Caco-2 (cell line): ENCODE measurements at regions of chr10 and their contacts with region 1.

Region 1: DNA sequence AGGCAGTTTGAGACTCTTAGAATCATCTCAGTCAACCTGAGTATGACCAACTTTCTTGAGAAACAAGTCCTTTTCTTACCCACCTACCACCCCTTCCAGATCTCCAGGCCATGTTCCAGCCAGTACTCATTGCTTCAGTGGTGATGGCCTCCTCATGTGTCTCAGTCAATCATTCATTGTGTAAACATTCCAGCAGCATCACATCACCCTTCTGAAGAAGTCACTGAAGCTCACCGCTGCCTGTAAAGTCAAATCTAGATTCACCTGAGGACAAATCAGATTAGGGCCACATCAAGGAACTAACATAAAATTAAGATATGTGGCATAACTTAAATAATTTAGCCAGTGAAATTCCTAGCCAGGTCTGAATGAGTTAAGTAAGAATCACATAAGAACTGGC is 467.3 kb upstream of the NRP1 start:
- DNase-seq: peak; percentile 81 to 88
- H3K4me3 ChIP-seq: no peak overlapping the region
- H3K4me3 Mint-ChIP-seq: peak overlapping the region; percentile 39
- H3K27ac Mint-ChIP-seq: peak overlapping the region; percentile 90
- H3K4me1 ChIP-seq: peaks cover 69% of the 10 kb centered on the region
- H3K4me1 Mint-ChIP-seq: peaks cover 50% of the 10 kb centered on the region
- H3K27me3 ChIP-seq: no peaks in the 10 kb centered on the region
- H3K27me3 Mint-ChIP-seq: no peaks in the 10 kb centered on the region
- CTCF ChIP-seq: no peak

Region 2: GRCh38 chr10:33258967-33259366 is 542.8 kb before region 1 on chr10:
- CTCF ChIA-PET with region 1: no interaction called
- POLR2A ChIA-PET with region 1: interaction called, 12 read pairs
- intact Hi-C with region 1: no loop called
- DNase-seq: no peak
- H3K4me3 ChIP-seq: no peak overlapping the region
- H3K4me3 Mint-ChIP-seq: no peak overlapping the region
- H3K27ac Mint-ChIP-seq: peak overlapping the region; percentile 55
- H3K4me1 ChIP-seq: peaks cover 42% of the 10 kb centered on the region
- H3K4me1 Mint-ChIP-seq: peaks cover 38% of the 10 kb centered on the region
- H3K27me3 ChIP-seq: no peaks in the 10 kb centered on the region
- H3K27me3 Mint-ChIP-seq: no peaks in the 10 kb centered on the region
- CTCF ChIP-seq: no peak

Region 3: DNA sequence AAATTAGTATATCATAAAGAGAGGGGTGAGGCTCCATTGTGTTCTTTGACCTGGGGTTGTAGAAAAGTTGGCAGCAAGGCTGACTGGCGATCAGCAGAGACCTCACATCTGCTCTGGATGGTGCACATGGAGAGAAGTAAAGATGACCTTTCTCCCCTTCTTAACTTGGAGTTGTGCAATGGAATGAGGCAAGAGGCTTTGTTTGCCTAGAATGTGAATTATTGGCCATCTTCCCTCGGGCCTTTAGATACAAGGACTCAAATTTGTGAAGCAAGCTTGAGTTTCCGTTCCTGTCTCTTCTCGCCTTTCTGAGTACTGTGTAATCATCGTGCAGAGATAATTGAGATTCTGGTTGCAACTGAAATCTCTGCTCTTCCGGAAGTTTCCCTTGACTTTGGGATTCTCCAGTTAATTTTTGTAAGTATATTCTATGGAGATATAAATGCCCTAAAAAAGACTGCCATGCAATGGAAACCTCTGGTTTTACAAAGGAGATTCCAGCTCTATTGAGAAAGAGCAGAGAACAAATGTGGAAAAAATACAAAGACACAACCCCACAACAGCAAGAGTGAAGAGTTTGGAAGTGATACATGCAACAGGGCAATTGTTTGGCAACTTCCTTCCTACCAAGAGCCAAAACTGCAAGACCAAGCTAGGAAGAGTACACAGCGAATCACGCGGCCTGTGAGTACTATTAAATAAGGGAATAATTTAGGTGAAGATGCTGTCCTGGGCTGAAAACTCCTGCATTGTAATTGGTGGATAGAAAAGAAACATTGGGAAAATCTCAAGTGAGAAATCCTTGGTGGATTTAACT is 75.0 kb after region 1 on chr10:
- CTCF ChIA-PET with region 1: no interaction called
- POLR2A ChIA-PET with region 1: no interaction called
- intact Hi-C with region 1: loop called (anchors 1 kb)
- DNase-seq: peak; percentile 80 to 81
- H3K4me3 ChIP-seq: no peak overlapping the region
- H3K4me3 Mint-ChIP-seq: peak overlapping the region; percentile 55
- H3K27ac Mint-ChIP-seq: peak overlapping the region; percentile 86
- H3K4me1 ChIP-seq: peaks cover 24% of the 10 kb centered on the region
- H3K4me1 Mint-ChIP-seq: peaks cover 22% of the 10 kb centered on the region
- H3K27me3 ChIP-seq: no peaks in the 10 kb centered on the region
- H3K27me3 Mint-ChIP-seq: no peaks in the 10 kb centered on the region
- CTCF ChIP-seq: no peak

Region 4: DNA sequence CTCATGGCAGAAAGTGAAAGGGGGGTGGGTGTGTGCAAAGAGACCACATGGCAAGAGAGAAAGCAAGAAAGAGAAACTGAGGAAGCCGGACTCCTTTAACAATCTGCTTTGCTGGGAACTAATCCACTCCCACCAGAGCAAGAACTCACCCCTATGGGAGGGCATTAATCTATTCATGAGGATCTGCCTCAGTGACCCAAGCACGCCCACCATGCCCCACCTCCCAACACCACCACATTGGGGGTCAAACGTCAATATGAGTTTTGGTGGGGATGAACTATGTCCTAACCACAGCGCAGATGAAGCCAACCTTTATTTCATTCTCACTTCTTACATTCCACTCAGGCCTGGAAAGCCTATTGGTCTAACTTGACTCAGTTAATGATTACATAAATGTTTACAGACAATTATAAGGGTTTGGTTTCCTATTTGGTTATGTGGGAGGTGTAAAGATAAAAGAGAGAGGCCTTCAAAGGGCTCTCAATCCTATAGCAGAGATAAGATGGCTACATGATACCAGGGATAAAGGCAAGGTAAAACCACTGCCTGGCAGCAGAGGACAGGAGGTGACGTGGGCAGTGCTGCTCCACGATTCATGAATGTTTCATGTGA is 411.6 kb after region 1 on chr10:
- CTCF ChIA-PET with region 1: no interaction called
- POLR2A ChIA-PET with region 1: no interaction called
- intact Hi-C with region 1: loop called (anchors 5 kb)
- DNase-seq: peak; percentile 82 to 85
- H3K4me3 ChIP-seq: no peak overlapping the region
- H3K4me3 Mint-ChIP-seq: peak overlapping the region; percentile 51
- H3K27ac Mint-ChIP-seq: peak overlapping the region; percentile 79
- H3K4me1 ChIP-seq: peaks cover 47% of the 10 kb centered on the region
- H3K4me1 Mint-ChIP-seq: peaks cover 54% of the 10 kb centered on the region
- H3K27me3 ChIP-seq: no peaks in the 10 kb centered on the region
- H3K27me3 Mint-ChIP-seq: no peaks in the 10 kb centered on the region
- CTCF ChIP-seq: peak in 1 of 2 experiments; percentile 47